ENCODE measurements at regions of chr3 and their contacts with region 1.

Region 1: DNA sequence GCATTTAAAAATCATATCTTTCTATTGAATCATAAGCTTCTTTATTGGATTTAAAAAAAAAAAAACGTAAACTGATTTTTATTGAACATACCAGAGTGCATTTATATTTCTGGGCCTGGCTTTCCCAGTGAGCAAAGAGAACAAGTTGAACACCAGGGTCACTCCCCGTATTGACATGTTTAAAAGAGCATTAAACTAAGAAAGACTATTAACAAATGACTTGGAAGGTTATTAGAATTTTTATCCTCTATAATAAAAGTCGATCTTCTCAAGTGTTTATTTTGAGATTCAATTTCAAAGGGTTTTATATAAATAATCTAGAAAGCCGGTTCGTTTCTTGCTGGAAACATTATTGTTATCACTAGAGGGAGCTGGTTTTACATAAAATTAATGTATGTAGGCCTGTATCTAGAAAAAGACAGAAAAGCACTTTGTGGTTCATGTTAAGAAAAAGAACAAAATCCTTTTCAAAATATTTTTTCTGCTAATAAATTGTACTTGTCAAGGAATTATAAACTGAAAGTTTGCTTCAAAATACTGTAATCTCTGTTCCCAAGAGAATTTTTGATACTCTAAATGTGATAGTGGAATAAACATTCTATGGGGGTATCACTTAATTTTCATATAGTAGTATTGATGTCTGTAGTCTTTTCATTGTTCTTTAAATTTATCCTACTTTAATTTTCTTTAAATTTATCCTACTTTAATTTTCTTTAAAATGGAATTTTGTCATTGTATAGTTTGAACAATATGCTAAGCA is 321.8 kb upstream of the MME start:
- DNase-seq: no peak
- ATAC-seq: no peak
- H3K4me3 ChIP-seq: no peak overlapping the region
- H3K27ac ChIP-seq: no peak overlapping the region
- H3K4me1 ChIP-seq: no peaks in the 10 kb centered on the region
- H3K27me3 ChIP-seq: no peaks in the 10 kb centered on the region
- CTCF ChIP-seq: peak; percentile 57; the same call in 1 of the 2 replicates

Region 2: GRCh38 chr3:155323063-155323666 is 564.9 kb after region 1 on chr3:
- CTCF ChIA-PET with region 1: no interaction called
- POLR2A ChIA-PET with region 1: no interaction called
- in situ Hi-C with region 1: no loop called
- intact Hi-C with region 1: loop called (anchors 1 kb)
- DNase-seq: peak; percentile 59
- ATAC-seq: peak; percentile 93
- H3K4me3 ChIP-seq: no peak overlapping the region
- H3K27ac ChIP-seq: no peak overlapping the region
- H3K4me1 ChIP-seq: no peaks in the 10 kb centered on the region
- H3K27me3 ChIP-seq: no peaks in the 10 kb centered on the region
- CTCF ChIP-seq: peak; percentile 81